ENCODE measurements at regions of chr10 and their contacts with region 1.

Region 1: DNA sequence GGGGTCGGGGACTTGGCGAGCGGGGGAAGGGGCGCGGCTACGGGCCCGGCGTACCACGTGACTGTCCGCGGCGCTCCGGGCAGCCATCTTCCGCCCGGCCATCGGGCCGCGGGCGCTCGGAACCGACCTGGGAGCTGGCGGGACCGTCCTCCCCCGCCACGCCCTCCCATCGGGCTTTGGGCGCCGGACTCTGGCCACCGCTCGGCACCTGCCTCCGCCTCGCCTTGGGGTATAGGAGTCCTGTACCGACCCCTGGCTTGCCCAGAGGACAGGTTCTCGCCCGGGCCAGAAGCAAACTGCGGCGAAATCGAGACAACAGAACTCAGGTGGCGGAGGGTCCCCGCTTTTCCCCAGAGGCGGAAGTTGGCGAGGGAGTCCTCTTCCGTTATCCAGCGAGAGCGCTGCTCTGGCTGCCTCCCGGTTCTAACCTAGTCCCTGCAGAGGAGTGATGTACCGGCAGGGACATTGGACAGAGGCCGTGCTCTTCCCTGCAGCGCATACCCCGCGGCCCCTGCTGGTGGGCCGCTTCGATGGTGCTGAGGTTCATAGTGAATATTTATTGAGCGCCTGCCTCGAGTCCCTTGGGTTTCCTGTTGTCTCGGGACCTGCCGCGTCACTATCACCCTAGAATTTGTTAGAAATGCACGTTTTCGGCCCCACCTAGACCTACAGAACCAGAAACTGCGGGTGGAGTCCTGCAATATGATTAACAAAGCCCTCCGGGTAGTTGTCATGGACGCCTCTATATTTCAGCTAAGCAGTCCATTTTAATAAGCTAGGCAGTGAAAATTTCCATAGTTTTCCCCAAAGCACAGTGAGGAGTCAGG is 1.3 kb upstream of the SGMS1 start:
- DNase-seq: peak; percentile 65
- H3K4me3 Mint-ChIP-seq: peak overlapping the region; percentile 82
- H3K27ac Mint-ChIP-seq: peak overlapping the region; percentile 96
- H3K4me1 Mint-ChIP-seq: peaks cover 10% of the 10 kb centered on the region
- H3K27me3 Mint-ChIP-seq: no peaks in the 10 kb centered on the region
- CTCF ChIP-seq: peak; percentile 55

Region 2: GRCh38 chr10:50310560-50311174 is 314.4 kb before region 1 on chr10:
- CTCF ChIA-PET with region 1: no interaction called
- POLR2A ChIA-PET with region 1: interaction called, 10 read pairs
- intact Hi-C with region 1: loop called (anchors 5 kb)
- DNase-seq: peak; percentile 54
- H3K4me3 Mint-ChIP-seq: no peak overlapping the region
- H3K27ac Mint-ChIP-seq: peak overlapping the region; percentile 80
- H3K4me1 Mint-ChIP-seq: peaks cover 12% of the 10 kb centered on the region
- H3K27me3 Mint-ChIP-seq: no peaks in the 10 kb centered on the region
- CTCF ChIP-seq: peak; percentile 24

Region 3: DNA sequence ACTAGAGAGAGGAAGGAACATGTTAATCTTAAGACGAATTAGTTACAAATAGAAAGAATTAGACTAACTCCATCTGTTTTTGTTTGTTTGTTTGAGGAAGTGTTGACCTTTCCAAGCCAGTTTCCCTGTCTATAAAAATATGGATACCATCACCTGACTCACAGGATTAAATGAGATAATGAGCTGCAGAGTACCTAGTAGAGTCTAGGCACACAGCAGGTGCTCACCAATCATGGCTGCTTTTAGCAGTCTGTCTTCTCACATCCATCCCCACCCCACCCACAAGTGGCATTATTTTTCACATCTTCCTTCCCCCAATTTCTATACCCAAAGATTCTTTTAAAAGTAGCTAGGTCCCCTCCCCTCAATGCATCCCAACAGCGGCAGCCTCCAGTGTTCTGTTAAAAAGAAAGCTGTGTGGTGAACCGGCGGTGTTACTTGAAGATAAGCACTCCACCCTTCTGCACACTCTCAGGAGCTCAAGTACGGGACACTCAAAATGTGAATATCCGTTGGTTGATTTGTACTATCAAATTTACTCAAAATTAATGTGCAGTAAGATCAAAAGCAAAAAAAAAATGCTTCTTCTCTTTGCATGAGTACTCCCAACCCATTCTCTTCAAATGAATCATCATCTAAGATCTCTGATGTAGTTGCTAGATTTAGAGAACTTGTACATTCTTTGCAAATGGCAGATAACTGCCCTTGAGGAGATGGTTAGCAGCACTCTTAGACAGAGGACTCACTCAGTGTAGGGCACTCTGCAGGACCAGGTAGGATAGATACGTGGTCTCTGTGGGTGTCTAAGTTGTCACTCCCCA is 228.4 kb before region 1 on chr10:
- CTCF ChIA-PET with region 1: no interaction called
- POLR2A ChIA-PET with region 1: interaction called, 36 read pairs
- intact Hi-C with region 1: no loop called
- DNase-seq: no peak
- H3K4me3 Mint-ChIP-seq: peak overlapping the region; percentile 8
- H3K27ac Mint-ChIP-seq: peak overlapping the region; percentile 37
- H3K4me1 Mint-ChIP-seq: peaks cover 58% of the 10 kb centered on the region
- H3K27me3 Mint-ChIP-seq: no peaks in the 10 kb centered on the region
- CTCF ChIP-seq: no peak

Region 4: GRCh38 chr10:50503661-50504320 is 121.3 kb before region 1 on chr10:
- CTCF ChIA-PET with region 1: no interaction called
- POLR2A ChIA-PET with region 1: interaction called, 18 read pairs
- intact Hi-C with region 1: no loop called
- DNase-seq: peak; percentile 79
- H3K4me3 Mint-ChIP-seq: no peak overlapping the region
- H3K27ac Mint-ChIP-seq: peak overlapping the region; percentile 10
- H3K4me1 Mint-ChIP-seq: peaks cover 23% of the 10 kb centered on the region
- H3K27me3 Mint-ChIP-seq: no peaks in the 10 kb centered on the region
- CTCF ChIP-seq: no peak

Region 5: DNA sequence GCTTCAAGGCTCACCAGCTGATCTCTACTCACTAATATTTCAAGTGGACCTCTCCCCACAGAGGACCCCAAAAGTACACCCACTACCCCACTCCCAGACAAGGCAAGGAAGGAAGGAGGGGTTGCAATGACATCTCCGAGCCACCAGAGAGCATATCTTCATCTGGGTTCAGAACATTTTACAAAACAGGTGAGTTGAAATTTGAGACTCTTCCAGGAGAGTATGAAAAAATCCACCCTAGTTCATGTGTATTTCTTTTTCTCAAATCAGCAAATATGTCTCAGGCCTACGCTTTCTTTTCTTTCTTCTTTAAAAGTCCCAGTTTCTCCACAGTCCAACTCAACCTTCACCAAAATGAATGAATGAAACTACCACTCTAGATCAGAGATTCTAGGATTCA is 63.3 kb before region 1 on chr10:
- CTCF ChIA-PET with region 1: interaction called, 51 read pairs
- POLR2A ChIA-PET with region 1: interaction called, 20 read pairs
- intact Hi-C with region 1: loop called (anchors 1 kb)
- DNase-seq: peak; percentile 56
- H3K4me3 Mint-ChIP-seq: no peak overlapping the region
- H3K27ac Mint-ChIP-seq: no peak overlapping the region
- H3K4me1 Mint-ChIP-seq: peaks cover 18% of the 10 kb centered on the region
- H3K27me3 Mint-ChIP-seq: no peaks in the 10 kb centered on the region
- CTCF ChIP-seq: peak; percentile 78

Region 6: GRCh38 chr10:50605269-50606263 is 19.5 kb before region 1 on chr10:
- CTCF ChIA-PET with region 1: interaction called, 15 read pairs
- POLR2A ChIA-PET with region 1: interaction called, 167 read pairs
- intact Hi-C with region 1: loop called (anchors 1 kb)
- DNase-seq: peak; percentile 95
- H3K4me3 Mint-ChIP-seq: peak overlapping the region; percentile 61
- H3K27ac Mint-ChIP-seq: peak overlapping the region; percentile 88
- H3K4me1 Mint-ChIP-seq: peaks cover 46% of the 10 kb centered on the region
- H3K27me3 Mint-ChIP-seq: no peaks in the 10 kb centered on the region
- CTCF ChIP-seq: no peak

Region 7: DNA sequence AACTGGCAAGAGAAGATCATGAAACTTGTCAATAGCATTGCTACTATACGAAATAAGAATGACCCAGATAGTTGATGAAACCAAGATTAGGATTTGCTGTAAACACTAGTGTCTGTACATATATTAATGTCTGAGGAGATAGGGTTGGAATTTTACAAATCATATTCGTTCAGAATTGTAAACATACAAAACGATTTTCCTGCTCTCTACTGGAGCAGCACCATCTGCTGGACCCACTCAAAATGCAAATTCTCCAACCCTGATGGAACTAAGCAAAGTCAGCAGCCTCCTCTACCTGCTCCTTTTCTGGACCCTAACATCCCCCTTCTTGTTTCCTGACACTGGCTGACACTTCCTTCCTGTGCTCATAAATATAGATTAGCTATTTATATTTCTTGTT is 28.1 kb after region 1 on chr10:
- CTCF ChIA-PET with region 1: interaction called, 11 read pairs
- POLR2A ChIA-PET with region 1: interaction called, 3 read pairs
- intact Hi-C with region 1: loop called (anchors 1 kb)
- DNase-seq: peak; percentile 31
- H3K4me3 Mint-ChIP-seq: no peak overlapping the region
- H3K27ac Mint-ChIP-seq: no peak overlapping the region
- H3K4me1 Mint-ChIP-seq: peaks cover 10% of the 10 kb centered on the region
- H3K27me3 Mint-ChIP-seq: no peaks in the 10 kb centered on the region
- CTCF ChIP-seq: peak; percentile 47

Measured in MCF 10A (cell line).